ENCODE measurements at regions of chr19 and their contacts with region 1.

Region 1: DNA sequence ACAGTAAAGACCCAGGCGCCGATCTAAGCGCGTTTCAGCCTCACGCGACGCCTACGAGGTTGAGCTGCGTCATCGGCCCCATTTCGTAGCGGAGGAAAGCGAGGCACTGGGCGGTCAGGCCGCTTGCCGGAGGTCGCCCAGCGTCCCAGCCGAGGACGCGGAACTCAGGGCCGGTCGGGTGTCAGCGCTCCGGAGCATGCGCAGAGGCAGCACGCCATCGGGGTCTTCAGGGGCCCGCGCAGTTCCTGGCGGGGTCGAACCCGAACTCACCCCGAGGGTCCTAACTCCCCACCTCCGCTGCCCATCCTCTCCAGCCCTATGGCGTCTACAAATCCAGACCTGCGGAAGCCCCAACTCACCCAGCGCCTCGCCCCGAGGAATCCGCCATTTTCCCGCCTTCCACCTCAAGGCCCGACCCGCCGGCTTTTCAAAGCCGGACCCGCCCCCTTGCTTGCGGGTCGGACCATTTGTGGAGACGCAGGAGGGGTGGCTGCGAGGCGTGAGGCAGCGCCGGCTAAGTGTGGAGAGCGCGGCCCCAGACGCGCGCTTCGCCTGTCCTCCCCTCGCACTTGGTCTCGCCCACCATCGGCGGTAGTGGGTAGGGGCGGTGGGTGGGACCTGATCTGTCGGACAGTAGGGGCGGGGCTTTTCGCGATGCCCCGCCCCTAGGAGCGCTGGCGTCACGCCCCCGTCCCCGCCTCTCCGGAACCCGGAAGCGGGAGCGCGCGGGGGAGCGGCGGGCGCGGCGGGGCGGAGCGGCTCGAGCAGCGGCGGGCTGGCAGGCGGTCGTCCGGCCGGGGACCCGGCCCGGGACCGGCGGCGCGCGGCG is at the starts of genes HAUS8 and MYO9B:
- DNase-seq: peak; percentile 98
- ATAC-seq: peak; percentile 87
- H3K4me3 Mint-ChIP-seq: peak within 1 kb of the TSS; percentile 99
- H3K27ac Mint-ChIP-seq: peak within 1 kb of the TSS; percentile 97
- H3K4me1 Mint-ChIP-seq: peaks cover 75% of the 10 kb centered on the region
- H3K27me3 Mint-ChIP-seq: no peaks in the 10 kb centered on the region
- CTCF ChIP-seq: no peak
- total RNA-seq, gene HAUS8: 15.8 and 17.8 TPM in 2 replicates
- total RNA-seq, gene MYO9B: 217 and 239 TPM in 2 replicates

Region 2: DNA sequence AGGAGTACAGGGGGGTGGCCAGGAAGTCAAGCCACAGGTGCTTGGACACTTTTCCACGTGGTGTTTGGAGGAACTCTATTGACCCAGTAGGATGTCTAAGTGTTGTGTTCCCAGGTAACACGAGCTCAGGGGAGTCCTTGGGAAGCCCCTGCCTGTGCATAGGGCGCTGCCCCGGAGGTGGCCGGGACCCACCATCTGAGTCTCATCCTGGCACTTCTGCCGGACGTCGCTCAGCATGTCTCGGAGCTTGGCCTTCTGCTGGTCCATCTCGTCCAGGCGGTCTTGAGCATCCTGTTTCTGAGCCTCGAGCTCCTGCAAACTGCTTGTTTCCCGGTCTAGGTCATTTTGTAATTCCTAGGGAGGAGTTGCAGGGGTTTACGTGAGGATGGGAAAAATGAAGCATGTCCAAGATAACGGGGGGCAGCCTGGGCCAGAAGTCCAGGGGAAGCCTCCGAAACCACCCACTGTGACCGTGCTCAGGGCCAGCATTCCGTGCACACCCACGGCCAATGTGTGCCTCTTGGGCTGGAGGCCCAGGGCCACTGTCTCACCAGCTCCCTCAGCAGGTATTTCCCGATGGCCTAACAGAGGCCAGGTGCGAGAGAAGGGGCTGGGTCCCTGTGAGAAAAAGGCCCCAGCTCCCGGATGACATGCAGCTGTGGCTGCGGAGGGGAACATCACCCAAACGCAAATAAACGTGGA is 670.7 kb before region 1 on chr19:
- CTCF ChIA-PET with region 1: no interaction called
- POLR2A ChIA-PET with region 1: no interaction called
- intact Hi-C with region 1: no loop called
- DNase-seq: no peak
- ATAC-seq: no peak
- H3K4me3 Mint-ChIP-seq: no peak overlapping the region
- H3K27ac Mint-ChIP-seq: no peak overlapping the region
- H3K4me1 Mint-ChIP-seq: peaks cover 35% of the 10 kb centered on the region
- H3K27me3 Mint-ChIP-seq: no peaks in the 10 kb centered on the region
- CTCF ChIP-seq: no peak

Region 3: DNA sequence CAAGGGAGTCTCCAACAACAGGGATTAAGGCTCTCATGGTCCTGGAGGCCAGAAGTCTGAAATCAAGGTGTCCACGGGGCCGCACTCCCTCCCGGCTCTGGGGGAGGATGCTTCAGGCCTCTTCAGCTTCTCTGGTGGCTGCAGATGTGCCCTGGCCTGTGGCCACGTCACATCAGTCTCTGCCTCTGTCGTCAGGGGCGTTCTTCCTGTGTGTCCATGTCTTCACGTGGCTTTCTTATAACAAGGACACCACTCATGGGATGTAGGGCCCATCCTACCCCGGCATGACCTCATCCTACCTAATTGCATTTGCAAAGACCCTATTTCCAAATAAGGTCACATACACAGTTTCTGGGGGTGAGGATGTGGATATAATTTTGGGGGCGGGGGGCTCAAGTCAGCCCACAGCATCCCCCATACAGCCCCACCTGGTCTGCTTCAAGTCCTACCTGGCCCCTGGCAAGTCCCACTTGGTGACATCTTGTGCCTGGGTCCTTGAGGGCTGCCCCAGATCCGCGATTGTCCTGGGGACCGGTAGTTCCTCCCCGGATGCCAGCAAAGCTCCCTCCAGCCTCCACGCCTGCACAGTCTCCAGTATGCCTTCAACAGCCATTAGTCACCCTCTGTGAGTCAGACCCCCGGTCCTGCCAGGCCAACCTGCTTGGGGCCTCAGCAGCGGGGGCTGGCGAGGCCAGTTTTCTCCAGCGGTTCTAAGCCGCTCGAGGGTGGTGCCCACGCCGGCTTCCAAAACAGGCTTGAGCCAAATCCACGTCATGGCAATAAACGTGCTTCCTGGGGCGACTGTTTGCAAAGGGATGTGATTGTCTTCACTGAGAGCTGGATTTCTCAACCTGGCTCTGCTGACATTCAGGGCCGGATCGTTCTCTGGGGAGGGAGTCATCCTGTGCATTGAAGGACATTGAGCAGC is 32.5 kb after region 1 on chr19:
- CTCF ChIA-PET with region 1: no interaction called
- POLR2A ChIA-PET with region 1: interaction called, 14 read pairs
- intact Hi-C with region 1: loop called (anchors 1 kb)
- DNase-seq: no peak
- ATAC-seq: peak; percentile 23
- H3K4me3 Mint-ChIP-seq: peak overlapping the region; percentile 53
- H3K27ac Mint-ChIP-seq: peak overlapping the region; percentile 86
- H3K4me1 Mint-ChIP-seq: peaks cover 93% of the 10 kb centered on the region
- H3K27me3 Mint-ChIP-seq: no peaks in the 10 kb centered on the region
- CTCF ChIP-seq: no peak

Region 4: GRCh38 chr19:17183858-17184321 is 108.6 kb after region 1 on chr19:
- CTCF ChIA-PET with region 1: interaction called, 4 read pairs
- POLR2A ChIA-PET with region 1: interaction called, 7 read pairs
- intact Hi-C with region 1: loop called (anchors 2 kb)
- DNase-seq: peak; percentile 42
- ATAC-seq: peak; percentile 85
- H3K4me3 Mint-ChIP-seq: peak overlapping the region; percentile 79
- H3K27ac Mint-ChIP-seq: peak overlapping the region; percentile 99
- H3K4me1 Mint-ChIP-seq: peaks cover 32% of the 10 kb centered on the region
- H3K27me3 Mint-ChIP-seq: no peaks in the 10 kb centered on the region
- CTCF ChIP-seq: no peak

Region 5: GRCh38 chr19:17201913-17202648 is 126.8 kb after region 1 on chr19:
- CTCF ChIA-PET with region 1: no interaction called
- POLR2A ChIA-PET with region 1: no interaction called
- intact Hi-C with region 1: no loop called
- DNase-seq: no peak
- ATAC-seq: peak; percentile 38
- H3K4me3 Mint-ChIP-seq: no peak overlapping the region
- H3K27ac Mint-ChIP-seq: no peak overlapping the region
- H3K4me1 Mint-ChIP-seq: no peaks in the 10 kb centered on the region
- H3K27me3 Mint-ChIP-seq: no peaks in the 10 kb centered on the region
- CTCF ChIP-seq: no peak

Region 6: GRCh38 chr19:17235618-17236377 is 160.5 kb after region 1 on chr19:
- CTCF ChIA-PET with region 1: interaction called, 9 read pairs
- POLR2A ChIA-PET with region 1: interaction called, 4 read pairs
- intact Hi-C with region 1: loop called (anchors 2 kb)
- DNase-seq: peak; percentile 66
- ATAC-seq: peak; percentile 90
- H3K4me3 Mint-ChIP-seq: peak overlapping the region; percentile 82
- H3K27ac Mint-ChIP-seq: no peak overlapping the region
- H3K4me1 Mint-ChIP-seq: peaks cover 9% of the 10 kb centered on the region
- H3K27me3 Mint-ChIP-seq: no peaks in the 10 kb centered on the region
- CTCF ChIP-seq: no peak

Region 7: GRCh38 chr19:17390665-17391370 is 315.6 kb after region 1 on chr19:
- CTCF ChIA-PET with region 1: no interaction called
- POLR2A ChIA-PET with region 1: no interaction called
- intact Hi-C with region 1: loop called (anchors 5 kb)
- DNase-seq: peak; percentile 85
- ATAC-seq: peak; percentile 100
- H3K4me3 Mint-ChIP-seq: peak overlapping the region; percentile 86
- H3K27ac Mint-ChIP-seq: peak overlapping the region; percentile 24
- H3K4me1 Mint-ChIP-seq: peaks cover 21% of the 10 kb centered on the region
- H3K27me3 Mint-ChIP-seq: no peaks in the 10 kb centered on the region
- CTCF ChIP-seq: no peak